Calu3 (cell line): ENCODE measurements at regions of chr7 and their contacts with region 1.

Region 1: GRCh38 chr7:76179686-76180085 is 22.0 kb upstream of the SRRM3 start:
- DNase-seq: no peak
- H3K4me3 Mint-ChIP-seq: no peak overlapping the region
- H3K27ac Mint-ChIP-seq: no peak overlapping the region
- H3K4me1 Mint-ChIP-seq: no peaks in the 10 kb centered on the region
- H3K27me3 Mint-ChIP-seq: no peaks in the 10 kb centered on the region
- CTCF ChIP-seq: no peak

Region 2: GRCh38 chr7:75951511-75951917 is 228.2 kb before region 1 on chr7:
- CTCF ChIA-PET with region 1: no interaction called
- intact Hi-C with region 1: no loop called
- DNase-seq: no peak
- H3K4me3 Mint-ChIP-seq: no peak overlapping the region
- H3K27ac Mint-ChIP-seq: no peak overlapping the region
- H3K4me1 Mint-ChIP-seq: no peaks in the 10 kb centered on the region
- H3K27me3 Mint-ChIP-seq: no peaks in the 10 kb centered on the region
- CTCF ChIP-seq: no peak

Region 3: GRCh38 chr7:76262683-76263402 is 83.2 kb after region 1 on chr7:
- CTCF ChIA-PET with region 1: interaction called, 13 read pairs
- intact Hi-C with region 1: loop called (anchors 2 kb)
- DNase-seq: peak; percentile 59
- H3K4me3 Mint-ChIP-seq: no peak overlapping the region
- H3K27ac Mint-ChIP-seq: no peak overlapping the region
- H3K4me1 Mint-ChIP-seq: no peaks in the 10 kb centered on the region
- H3K27me3 Mint-ChIP-seq: peaks cover 19% of the 10 kb centered on the region
- CTCF ChIP-seq: peak; percentile 45

Region 4: DNA sequence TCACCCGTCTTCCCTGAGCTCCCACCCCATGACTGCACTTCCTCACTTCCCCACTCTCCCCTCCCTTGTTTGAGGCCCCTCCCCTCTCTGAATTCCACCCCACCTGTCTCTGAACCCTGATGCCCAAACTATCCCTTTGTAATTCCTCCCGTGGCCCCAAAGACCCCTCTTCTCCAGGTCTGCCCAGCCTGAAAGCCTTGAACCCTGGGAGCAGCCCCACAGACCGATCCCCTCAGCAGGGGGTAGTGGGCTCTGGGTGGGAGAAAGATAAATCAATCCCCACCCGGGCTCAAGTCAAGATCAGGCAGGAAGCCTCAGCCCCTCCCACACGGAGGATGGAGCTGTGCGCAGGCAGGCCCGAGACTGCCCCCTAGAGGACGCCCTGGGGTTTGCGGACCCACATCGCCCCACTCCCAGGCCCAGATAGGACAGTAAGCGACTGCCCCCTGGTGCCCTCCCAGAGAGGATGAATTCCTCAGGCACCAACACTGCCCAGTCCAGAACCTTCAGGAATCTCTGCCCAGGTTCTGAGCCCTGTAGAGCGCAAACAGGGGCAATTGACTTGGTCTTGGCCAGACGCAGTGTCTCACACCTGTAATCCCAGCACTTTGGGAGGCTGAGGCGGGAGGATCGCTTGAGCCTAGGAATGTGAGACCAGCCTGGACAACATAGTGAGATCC is 134.5 kb after region 1 on chr7:
- CTCF ChIA-PET with region 1: interaction called, 14 read pairs
- intact Hi-C with region 1: loop called (anchors 1 kb)
- DNase-seq: peak; percentile 93
- H3K4me3 Mint-ChIP-seq: no peak overlapping the region
- H3K27ac Mint-ChIP-seq: no peak overlapping the region
- H3K4me1 Mint-ChIP-seq: peaks cover 17% of the 10 kb centered on the region
- H3K27me3 Mint-ChIP-seq: no peaks in the 10 kb centered on the region
- CTCF ChIP-seq: peak; percentile 96